A673 (cell line): ENCODE measurements at regions of chr7 and their contacts with region 1.

Region 1: DNA sequence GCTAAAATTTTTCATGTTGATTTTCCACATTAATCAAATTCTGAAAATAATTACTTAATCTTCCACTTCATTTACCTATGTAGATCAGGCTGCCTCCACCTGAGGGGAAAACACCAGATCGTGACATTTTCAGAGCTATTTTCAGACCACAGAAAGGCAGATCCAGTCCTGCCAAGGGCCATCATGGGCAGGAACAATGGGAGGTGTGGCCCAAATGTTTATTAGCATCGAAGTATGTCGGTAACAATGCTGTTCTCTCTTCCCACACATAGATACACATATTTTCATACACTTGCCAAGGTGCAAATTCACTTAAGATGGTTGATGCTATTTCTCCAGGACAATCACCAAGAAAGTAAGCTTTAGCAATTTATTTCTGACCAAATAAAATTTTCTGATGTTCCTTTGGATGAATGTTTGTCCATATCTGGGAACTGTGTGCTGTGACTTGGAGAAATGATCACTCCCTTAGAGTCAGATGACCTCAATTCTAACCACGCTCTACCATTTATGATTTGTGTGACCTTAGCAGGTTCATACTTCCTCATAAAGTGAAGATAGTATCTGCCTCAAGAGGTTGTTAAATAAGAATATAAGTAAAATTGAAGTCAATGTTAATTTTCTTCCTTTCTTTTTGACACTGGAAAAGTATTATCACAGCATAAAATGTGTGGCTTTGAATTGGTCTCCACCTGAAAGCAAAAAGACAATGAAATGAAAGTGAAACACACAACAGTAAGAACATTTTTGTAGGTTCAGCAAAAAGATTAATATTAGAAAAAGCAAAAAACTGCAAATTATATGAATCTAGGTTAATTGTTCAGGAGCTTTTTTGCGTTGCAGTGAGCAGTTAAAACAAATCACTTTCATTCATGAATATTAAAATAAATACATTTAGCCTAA is 310.4 kb upstream of the PHF14 start:
- DNase-seq: no peak
- H3K4me3 ChIP-seq: no peak overlapping the region
- H3K27ac ChIP-seq: no peak overlapping the region
- H3K4me1 ChIP-seq: no peaks in the 10 kb centered on the region
- H3K27me3 ChIP-seq: no peaks in the 10 kb centered on the region
- CTCF ChIP-seq: no peak

Region 2: GRCh38 chr7:10355816-10356215 is 307.4 kb before region 1 on chr7:
- CTCF ChIA-PET with region 1: no interaction called
- POLR2A ChIA-PET with region 1: no interaction called
- intact Hi-C with region 1: no loop called
- DNase-seq: no peak
- H3K4me3 ChIP-seq: no peak overlapping the region
- H3K27ac ChIP-seq: no peak overlapping the region
- H3K4me1 ChIP-seq: no peaks in the 10 kb centered on the region
- H3K27me3 ChIP-seq: no peaks in the 10 kb centered on the region
- CTCF ChIP-seq: no peak

Region 3: DNA sequence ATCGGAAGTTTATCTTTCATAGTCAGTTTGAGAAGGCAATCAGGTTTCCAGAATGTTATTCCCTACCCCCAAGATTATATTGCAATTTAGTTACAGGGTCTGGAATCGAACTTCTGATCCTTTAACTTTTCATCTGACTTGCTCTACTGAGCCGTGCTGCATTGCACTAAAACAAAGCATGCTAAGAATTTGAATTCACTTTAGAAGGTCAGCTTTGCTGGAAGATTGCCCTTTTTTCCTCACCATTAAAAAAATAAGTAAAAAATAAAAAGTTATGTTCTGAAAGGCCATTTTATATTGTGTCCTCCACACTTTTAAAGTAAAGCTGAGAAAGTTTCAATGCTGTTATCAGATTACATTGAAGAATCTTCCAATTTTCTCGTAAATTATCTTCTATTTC is 78.3 kb before region 1 on chr7:
- CTCF ChIA-PET with region 1: no interaction called
- POLR2A ChIA-PET with region 1: no interaction called
- intact Hi-C with region 1: loop called (anchors 2 kb)
- DNase-seq: no peak
- H3K4me3 ChIP-seq: no peak overlapping the region
- H3K27ac ChIP-seq: no peak overlapping the region
- H3K4me1 ChIP-seq: no peaks in the 10 kb centered on the region
- H3K27me3 ChIP-seq: no peaks in the 10 kb centered on the region
- CTCF ChIP-seq: no peak

Region 4: GRCh38 chr7:10720047-10720446 is 56.8 kb after region 1 on chr7:
- CTCF ChIA-PET with region 1: no interaction called
- POLR2A ChIA-PET with region 1: no interaction called
- intact Hi-C with region 1: no loop called
- DNase-seq: no peak
- H3K4me3 ChIP-seq: no peak overlapping the region
- H3K27ac ChIP-seq: no peak overlapping the region
- H3K4me1 ChIP-seq: no peaks in the 10 kb centered on the region
- H3K27me3 ChIP-seq: no peaks in the 10 kb centered on the region
- CTCF ChIP-seq: 0 out of 2 replicates have a peak, but pooled peaks have one; percentile 15

Region 5: GRCh38 chr7:10756981-10757380 is 93.7 kb after region 1 on chr7:
- CTCF ChIA-PET with region 1: no interaction called
- POLR2A ChIA-PET with region 1: no interaction called
- intact Hi-C with region 1: no loop called
- DNase-seq: no peak
- H3K4me3 ChIP-seq: no peak overlapping the region
- H3K27ac ChIP-seq: no peak overlapping the region
- H3K4me1 ChIP-seq: no peaks in the 10 kb centered on the region
- H3K27me3 ChIP-seq: no peaks in the 10 kb centered on the region
- CTCF ChIP-seq: no peak